ENCODE measurements at regions of chr13 and their contacts with region 1.

Region 1: GRCh38 chr13:81639984-81640582 is 1299.2 kb upstream of the SPRY2 start:
- DNase-seq: peak; percentile 14
- H3K4me3 ChIP-seq: no peak overlapping the region
- H3K27ac ChIP-seq: no peak overlapping the region
- H3K4me1 ChIP-seq: no peaks in the 10 kb centered on the region
- H3K27me3 ChIP-seq: no peaks in the 10 kb centered on the region
- CTCF ChIP-seq: peak; percentile 66 to 77

Region 2: GRCh38 chr13:81577601-81578195 is 62.4 kb before region 1 on chr13:
- CTCF ChIA-PET with region 1: interaction called, 11 read pairs
- dilution Hi-C with region 1: no loop called
- in situ Hi-C with region 1: no loop called
- intact Hi-C with region 1: no loop called
- DNase-seq: no peak
- H3K4me3 ChIP-seq: no peak overlapping the region
- H3K27ac ChIP-seq: no peak overlapping the region
- H3K4me1 ChIP-seq: no peaks in the 10 kb centered on the region
- H3K27me3 ChIP-seq: no peaks in the 10 kb centered on the region
- CTCF ChIP-seq: no peak

Region 3: GRCh38 chr13:82165396-82166174 is 525.5 kb after region 1 on chr13:
- CTCF ChIA-PET with region 1: no interaction called
- dilution Hi-C with region 1: no loop called
- in situ Hi-C with region 1: no loop called
- intact Hi-C with region 1: no loop called
- DNase-seq: no peak
- H3K4me3 ChIP-seq: no peak overlapping the region
- H3K27ac ChIP-seq: no peak overlapping the region
- H3K4me1 ChIP-seq: no peaks in the 10 kb centered on the region
- H3K27me3 ChIP-seq: no peaks in the 10 kb centered on the region
- CTCF ChIP-seq: no peak

Measured in mammary epithelial cell (primary cell).